ENCODE measurements at regions of chr15 and their contacts with region 1.

Region 1: GRCh38 chr15:101008158-101009139 is 89.3 kb downstream of the LRRK1 start:
- DNase-seq: peak; percentile 80
- H3K4me3 Mint-ChIP-seq: peak overlapping the region; percentile 89
- H3K27ac Mint-ChIP-seq: peak overlapping the region; percentile 18
- H3K4me1 Mint-ChIP-seq: peaks cover 19% of the 10 kb centered on the region
- H3K27me3 Mint-ChIP-seq: peaks cover 21% of the 10 kb centered on the region

Region 2: DNA sequence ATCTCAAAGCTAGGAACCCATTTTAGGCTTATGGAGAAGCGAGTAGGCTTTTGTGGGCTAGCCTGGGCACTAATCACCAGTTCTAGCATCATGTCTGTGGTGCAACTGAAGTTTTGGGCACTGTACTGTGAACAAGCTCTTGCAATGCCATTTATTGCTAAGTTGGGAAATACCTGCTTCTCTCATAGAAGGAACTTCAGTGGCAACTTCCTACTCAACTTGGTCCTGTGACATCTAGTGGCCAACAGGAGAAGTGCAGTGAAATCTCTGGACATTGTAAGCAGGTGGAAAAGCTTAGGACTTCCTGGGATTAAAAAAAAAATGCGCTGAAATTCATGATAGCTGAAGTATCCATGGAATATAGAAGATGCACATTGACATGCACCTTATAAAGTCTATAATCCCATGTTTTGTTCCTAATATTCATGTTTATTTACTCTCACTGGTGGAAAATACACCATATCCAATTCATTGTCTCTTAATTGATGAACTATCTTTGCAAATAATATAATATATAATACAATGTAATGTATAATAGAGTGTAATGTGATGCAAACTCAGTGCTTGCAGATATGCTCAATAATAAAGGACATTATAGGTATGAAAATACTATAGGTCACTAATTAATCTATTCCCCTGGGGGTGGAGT is 135.3 kb before region 1 on chr15:
- intact Hi-C with region 1: loop called (anchors 1 kb)
- DNase-seq: peak; percentile 32
- H3K4me3 Mint-ChIP-seq: no peak overlapping the region
- H3K27ac Mint-ChIP-seq: no peak overlapping the region
- H3K4me1 Mint-ChIP-seq: no peaks in the 10 kb centered on the region
- H3K27me3 Mint-ChIP-seq: peaks cover 35% of the 10 kb centered on the region

Region 3: GRCh38 chr15:100981086-100981485 is 27.4 kb before region 1 on chr15:
- intact Hi-C with region 1: no loop called
- DNase-seq: no peak
- H3K4me3 Mint-ChIP-seq: no peak overlapping the region
- H3K27ac Mint-ChIP-seq: no peak overlapping the region
- H3K4me1 Mint-ChIP-seq: no peaks in the 10 kb centered on the region
- H3K27me3 Mint-ChIP-seq: peaks cover 39% of the 10 kb centered on the region

Region 4: GRCh38 chr15:101049856-101050622 is 41.6 kb after region 1 on chr15:
- intact Hi-C with region 1: no loop called
- DNase-seq: no peak
- H3K4me3 Mint-ChIP-seq: no peak overlapping the region
- H3K27ac Mint-ChIP-seq: no peak overlapping the region
- H3K4me1 Mint-ChIP-seq: no peaks in the 10 kb centered on the region
- H3K27me3 Mint-ChIP-seq: no peaks in the 10 kb centered on the region

Region 5: GRCh38 chr15:101807345-101807945 is 799.0 kb after region 1 on chr15:
- intact Hi-C with region 1: no loop called
- DNase-seq: no peak
- H3K4me3 Mint-ChIP-seq: no peak overlapping the region
- H3K27ac Mint-ChIP-seq: no peak overlapping the region
- H3K4me1 Mint-ChIP-seq: no peaks in the 10 kb centered on the region
- H3K27me3 Mint-ChIP-seq: peaks cover 6% of the 10 kb centered on the region

Measured in activated T-helper 1 cell treated with anti-CD3 and anti-CD28 coated beads, Interleukin-12 subunit alpha, Interleukin-12 subunit beta, Interleukin-2, Interleukin-4 antibody, amounts not matched to agents 30 ng/mL and 10 ng/mL and 1 ng/mL, durations not matched to agents 14 hours and 24 hours and 36 hours (primary cell).